ENCODE measurements at regions of chr3 and their contacts with region 1.

Region 1: DNA sequence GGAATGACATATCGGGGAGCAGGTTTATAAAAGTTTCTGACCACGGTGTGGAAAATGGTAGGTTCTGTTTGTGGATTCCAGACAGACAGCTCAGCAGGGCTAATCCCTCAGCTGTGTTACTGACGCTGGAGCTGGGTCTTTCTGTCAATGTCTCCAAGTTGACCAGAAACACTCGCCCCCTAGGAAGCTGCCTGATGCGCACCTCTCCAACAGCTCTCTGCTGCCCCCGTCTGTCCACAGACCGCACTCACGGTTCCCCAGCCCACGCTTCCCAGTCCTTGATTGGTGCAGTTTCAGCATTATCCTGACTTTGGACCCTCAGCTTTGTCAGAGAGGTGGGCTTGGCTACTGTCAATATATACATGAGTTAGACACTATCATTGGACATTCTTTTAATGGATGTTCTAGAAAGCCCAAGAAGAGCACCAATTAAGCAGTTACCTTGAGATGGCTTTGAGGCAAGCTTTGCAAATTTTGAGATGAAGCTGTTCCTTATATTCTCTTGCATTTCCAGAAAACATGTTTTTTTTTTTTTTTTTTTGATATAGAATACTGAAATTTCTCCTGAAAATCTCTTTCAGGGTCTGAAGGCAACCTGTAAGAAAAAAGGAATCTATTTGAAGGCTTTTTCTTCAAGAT is 98.9 kb upstream of the TBC1D5 start:
- DNase-seq: peak; percentile 52
- H3K4me3 ChIP-seq: no peak overlapping the region
- H3K27ac ChIP-seq: no peak overlapping the region
- H3K4me1 ChIP-seq: no peaks in the 10 kb centered on the region
- H3K27me3 ChIP-seq: no peaks in the 10 kb centered on the region
- CTCF ChIP-seq: peak; percentile 72 to 85 (median 80)
- POLR2A ChIP-seq: no peak

Region 2: DNA sequence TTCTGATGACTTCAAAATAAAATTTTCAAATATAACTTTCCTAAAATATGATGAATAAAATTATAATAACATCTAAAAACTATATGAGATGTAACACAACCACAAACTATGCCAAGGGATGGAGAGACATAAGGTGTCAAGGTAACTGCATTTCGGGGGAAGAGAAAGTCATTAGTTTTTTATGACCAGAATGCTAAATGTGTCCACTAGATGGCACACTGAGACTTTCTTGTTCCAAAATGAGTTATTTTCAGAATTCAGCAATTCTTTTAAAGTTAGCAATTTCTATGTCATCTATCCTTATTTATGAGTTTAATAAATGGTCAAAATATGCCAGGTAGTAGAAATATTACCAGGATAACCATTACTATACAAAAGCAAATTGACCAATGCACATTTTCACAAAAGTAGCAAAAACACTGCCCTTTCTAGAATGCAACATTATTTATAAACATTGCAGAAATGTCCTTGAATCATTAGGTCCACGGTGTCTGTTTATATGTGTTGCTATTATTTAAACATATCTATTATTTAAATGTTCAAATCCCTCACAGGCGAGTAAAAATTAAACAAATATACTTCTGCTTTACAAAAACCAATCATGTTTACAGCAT is 582.4 kb before region 1 on chr3:
- intact Hi-C with region 1: loop called (anchors 10 kb)
- DNase-seq: no peak
- H3K4me3 ChIP-seq: no peak overlapping the region
- H3K27ac ChIP-seq: no peak overlapping the region
- H3K4me1 ChIP-seq: no peaks in the 10 kb centered on the region
- H3K27me3 ChIP-seq: no peaks in the 10 kb centered on the region
- CTCF ChIP-seq: peak; percentile 46 to 68 (median 64)
- POLR2A ChIP-seq: no peak

Region 3: DNA sequence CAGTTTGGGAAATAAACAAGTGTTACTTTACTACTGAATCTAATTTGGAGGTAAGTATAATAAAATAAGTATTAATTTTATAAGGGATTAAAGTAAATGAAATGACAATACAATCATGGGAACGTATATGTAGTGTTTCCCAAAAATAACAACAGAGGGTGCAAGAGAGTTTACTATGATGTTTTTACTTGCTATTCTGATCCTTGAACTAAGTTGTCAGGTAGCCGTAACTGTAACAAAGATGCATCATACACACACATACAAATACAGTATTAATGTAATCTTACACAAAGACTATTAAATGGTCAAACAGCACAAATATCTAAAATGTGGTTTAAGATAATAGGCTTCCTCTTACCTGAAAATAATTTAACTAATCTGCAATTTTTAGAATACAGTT is 410.3 kb before region 1 on chr3:
- intact Hi-C with region 1: loop called (anchors 5 kb)
- DNase-seq: no peak
- H3K4me3 ChIP-seq: no peak overlapping the region
- H3K27ac ChIP-seq: no peak overlapping the region
- H3K4me1 ChIP-seq: no peaks in the 10 kb centered on the region
- H3K27me3 ChIP-seq: no peaks in the 10 kb centered on the region
- CTCF ChIP-seq: peak in 3 of 4 experiments; percentile 16 to 56 (median 49)
- POLR2A ChIP-seq: no peak

Region 4: DNA sequence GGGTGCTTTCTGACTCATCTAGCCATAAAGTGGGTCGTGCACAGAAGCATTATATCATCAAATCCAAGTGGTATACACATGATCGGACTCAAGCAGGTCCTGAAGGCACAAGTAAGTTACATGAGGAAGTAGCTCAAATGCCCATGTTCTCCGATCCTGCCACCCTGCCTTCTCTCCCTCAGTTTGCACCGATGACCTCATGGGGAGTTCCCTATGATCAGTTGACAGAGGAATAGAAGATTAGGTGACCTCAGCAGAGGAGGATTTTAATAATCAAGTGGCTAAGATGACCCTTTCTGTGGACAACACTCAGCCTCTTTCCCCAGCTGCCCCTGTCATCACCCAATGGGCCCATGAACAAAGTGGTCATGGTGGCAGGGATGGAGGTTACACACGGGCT is 248.4 kb before region 1 on chr3:
- intact Hi-C with region 1: no loop called
- DNase-seq: no peak
- H3K4me3 ChIP-seq: no peak overlapping the region
- H3K27ac ChIP-seq: no peak overlapping the region
- H3K4me1 ChIP-seq: no peaks in the 10 kb centered on the region
- H3K27me3 ChIP-seq: no peaks in the 10 kb centered on the region
- CTCF ChIP-seq: no peak
- POLR2A ChIP-seq: no peak

Region 5: GRCh38 chr3:17645072-17645698 is 196.1 kb before region 1 on chr3:
- intact Hi-C with region 1: loop called (anchors 10 kb)
- DNase-seq: peak; percentile 27
- H3K4me3 ChIP-seq: no peak overlapping the region
- H3K27ac ChIP-seq: no peak overlapping the region
- H3K4me1 ChIP-seq: no peaks in the 10 kb centered on the region
- H3K27me3 ChIP-seq: no peaks in the 10 kb centered on the region
- CTCF ChIP-seq: peak in 3 of 4 experiments; percentile 45 to 70 (median 60)
- POLR2A ChIP-seq: no peak

Measured in prostate gland (tissue), 2 donors.